ENCODE measurements at regions of chr5 and their contacts with region 1.

Region 1: DNA sequence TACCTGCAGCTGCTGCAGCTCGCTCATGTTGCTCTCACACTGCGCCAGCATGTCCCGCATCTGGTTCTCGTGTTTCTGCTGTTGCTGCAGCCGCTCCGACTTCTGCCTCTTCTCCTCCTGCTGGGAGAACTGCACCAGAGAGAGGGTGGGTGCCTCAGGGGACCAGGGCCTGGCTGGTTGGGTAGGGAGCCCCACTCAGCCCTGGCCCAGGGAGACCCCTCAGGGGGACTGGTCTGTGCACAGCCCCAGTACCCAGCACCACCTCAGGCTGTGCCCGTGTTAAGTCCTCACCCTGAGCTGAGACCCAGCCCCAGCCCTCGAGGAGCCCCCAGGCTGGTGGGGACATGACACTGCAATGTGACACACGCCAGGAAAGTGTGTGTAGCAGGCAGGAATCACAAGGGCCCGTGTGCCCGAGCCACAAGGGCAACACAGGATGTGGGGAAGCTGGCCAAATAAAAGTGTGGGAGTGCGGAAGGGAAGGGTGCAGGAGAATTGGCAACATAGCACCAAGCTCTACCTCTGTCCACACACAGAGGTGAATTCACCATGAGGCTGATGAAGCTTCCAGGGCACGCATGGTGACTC is 48.2 kb upstream of the FBXW11 start:
- DNase-seq: no peak
- H3K4me3 Mint-ChIP-seq: no peak overlapping the region
- H3K27ac Mint-ChIP-seq: no peak overlapping the region
- H3K4me1 Mint-ChIP-seq: peaks cover 11% of the 10 kb centered on the region
- H3K27me3 Mint-ChIP-seq: no peaks in the 10 kb centered on the region

Region 2: GRCh38 chr5:171984748-171985419 is 69.8 kb before region 1 on chr5:
- CTCF ChIA-PET with region 1: no interaction called
- POLR2A ChIA-PET with region 1: no interaction called
- DNase-seq: peak; percentile 57
- H3K4me3 Mint-ChIP-seq: no peak overlapping the region
- H3K27ac Mint-ChIP-seq: no peak overlapping the region
- H3K4me1 Mint-ChIP-seq: peaks cover 33% of the 10 kb centered on the region
- H3K27me3 Mint-ChIP-seq: no peaks in the 10 kb centered on the region

Region 3: GRCh38 chr5:172065501-172065990 is 10.9 kb after region 1 on chr5:
- CTCF ChIA-PET with region 1: interaction called, 9 read pairs
- POLR2A ChIA-PET with region 1: interaction called, 21 read pairs
- DNase-seq: no peak
- H3K4me3 Mint-ChIP-seq: no peak overlapping the region
- H3K27ac Mint-ChIP-seq: peak overlapping the region; percentile 82
- H3K4me1 Mint-ChIP-seq: peaks cover 54% of the 10 kb centered on the region
- H3K27me3 Mint-ChIP-seq: no peaks in the 10 kb centered on the region

Region 4: DNA sequence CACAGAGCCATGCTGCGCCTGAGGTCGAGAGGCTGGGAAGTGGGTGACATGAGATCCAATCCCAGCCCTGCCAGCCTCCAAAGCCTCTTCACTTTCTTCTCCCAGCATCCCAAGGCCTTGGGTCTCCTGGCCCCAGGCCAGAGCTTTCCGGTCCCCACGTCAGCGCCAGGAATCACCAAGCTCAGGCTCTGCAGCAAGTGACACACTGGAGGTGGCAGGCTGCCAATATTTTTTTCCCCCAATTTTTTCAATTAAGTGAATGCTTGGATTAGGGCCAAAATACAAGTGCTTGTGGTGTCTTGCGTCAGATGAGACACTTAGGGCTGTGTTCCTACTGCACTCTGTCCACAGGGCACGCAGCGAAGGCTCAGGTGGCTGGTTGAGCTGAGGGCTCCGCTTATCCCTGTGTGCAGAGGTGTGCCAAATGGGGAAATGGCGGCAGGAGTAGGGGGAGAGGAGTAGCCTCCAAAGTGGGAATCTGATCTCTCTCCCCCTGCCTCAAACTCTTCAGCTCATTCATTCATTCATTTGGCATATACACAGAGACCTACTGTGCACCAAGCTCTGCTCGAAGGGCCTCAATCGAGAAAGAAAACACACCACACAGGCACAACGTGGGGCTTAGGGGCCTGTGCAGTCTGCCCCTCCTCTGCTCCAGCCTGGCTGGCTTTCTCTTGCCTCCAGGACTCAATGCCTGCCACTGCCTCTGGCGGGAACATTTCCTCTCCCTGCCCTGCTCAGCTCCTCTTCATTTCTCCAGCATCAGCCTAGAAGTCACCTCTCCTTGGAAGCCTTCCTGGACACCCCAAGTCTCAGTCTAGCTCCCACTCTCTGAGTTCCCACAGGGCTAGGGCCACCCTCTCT is 383.0 kb after region 1 on chr5:
- CTCF ChIA-PET with region 1: no interaction called
- POLR2A ChIA-PET with region 1: no interaction called
- DNase-seq: no peak
- H3K4me3 Mint-ChIP-seq: no peak overlapping the region
- H3K27ac Mint-ChIP-seq: no peak overlapping the region
- H3K4me1 Mint-ChIP-seq: peaks cover 2% of the 10 kb centered on the region
- H3K27me3 Mint-ChIP-seq: peaks cover 5% of the 10 kb centered on the region

Measured in activated CD4-positive, alpha-beta memory T cell treated with anti-CD3 and anti-CD28 coated beads, Interleukin-2, amount 10 ng/mL, durations not matched to agents 7 days and 5 days (primary cell).